Panc1 (cell line): ENCODE measurements at regions of chr7 and their contacts with region 1.

Region 1: DNA sequence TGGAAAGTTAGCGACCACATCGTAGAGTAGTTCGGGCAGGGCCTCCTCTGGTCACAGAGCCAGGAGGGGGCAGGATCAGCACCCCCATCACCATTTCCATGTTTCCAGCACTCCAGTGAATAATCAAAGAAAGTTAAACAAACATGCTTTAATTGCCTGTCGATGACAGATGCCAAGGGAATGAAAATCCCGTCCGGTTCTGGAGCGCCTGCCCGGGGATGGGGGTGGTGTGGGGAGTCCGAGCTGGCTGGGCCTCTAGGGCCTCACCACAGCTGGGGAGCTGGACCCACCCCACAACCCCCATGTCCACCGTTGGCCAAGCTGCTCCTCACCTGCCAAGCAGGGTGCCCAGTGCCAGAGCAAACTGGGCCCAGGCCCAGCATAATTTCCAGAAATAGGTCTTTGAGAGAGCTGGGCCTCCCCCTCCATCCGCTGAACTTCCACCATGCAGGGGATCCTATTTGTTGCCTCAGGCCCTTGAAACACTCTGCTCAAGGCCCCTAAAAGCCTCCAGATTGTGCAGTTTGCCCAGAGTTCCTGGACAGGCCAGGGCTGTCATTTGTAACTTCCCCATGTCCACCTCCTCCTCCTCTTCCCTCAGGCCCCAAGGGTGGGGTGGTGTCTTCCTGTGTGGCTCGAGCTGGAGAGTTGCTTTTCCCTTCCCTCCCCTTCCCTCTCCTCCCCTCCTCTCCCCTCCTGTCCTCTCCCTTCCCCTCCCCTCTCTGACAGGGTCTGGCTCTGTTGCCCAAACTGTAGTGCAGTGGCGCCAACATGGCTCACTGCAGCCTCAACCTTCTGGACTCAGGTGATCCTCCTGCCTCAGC is 101.0 kb downstream of the MYL10 start:
- DNase-seq: no peak
- ATAC-seq: peak; percentile 88
- H3K4me3 ChIP-seq: no peak overlapping the region
- H3K27ac ChIP-seq: peak overlapping the region; percentile 62
- H3K4me1 ChIP-seq: peaks cover 15% of the 10 kb centered on the region
- H3K27me3 ChIP-seq: no peaks in the 10 kb centered on the region
- CTCF ChIP-seq: no peak

Region 2: DNA sequence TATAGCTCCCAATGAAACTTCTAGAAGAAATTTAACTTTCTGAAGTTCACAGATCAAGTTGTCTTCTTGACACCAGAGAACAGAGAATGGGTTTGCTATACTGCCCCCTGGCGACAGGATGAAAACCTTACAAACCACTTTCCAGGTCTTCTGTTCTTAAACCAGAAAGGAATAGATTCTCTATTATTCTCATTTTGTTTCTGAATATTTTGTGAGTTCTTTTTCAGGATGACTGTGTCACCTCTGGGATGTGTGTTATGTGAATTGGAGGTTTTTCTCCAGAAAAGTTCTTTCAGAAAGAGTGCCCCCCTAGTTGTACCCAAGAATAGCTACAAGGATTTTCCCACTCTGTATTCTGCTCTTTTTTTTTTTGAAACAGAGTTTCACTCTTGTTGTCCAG is 212.7 kb before region 1 on chr7:
- CTCF ChIA-PET with region 1: no interaction called
- POLR2A ChIA-PET with region 1: no interaction called
- in situ Hi-C with region 1: no loop called
- intact Hi-C with region 1: no loop called
- DNase-seq: no peak
- ATAC-seq: peak; percentile 66; the same call in 1 of the 2 replicates
- H3K4me3 ChIP-seq: no peak overlapping the region
- H3K27ac ChIP-seq: no peak overlapping the region
- H3K4me1 ChIP-seq: no peaks in the 10 kb centered on the region
- H3K27me3 ChIP-seq: no peaks in the 10 kb centered on the region
- CTCF ChIP-seq: peak; percentile 85

Region 3: DNA sequence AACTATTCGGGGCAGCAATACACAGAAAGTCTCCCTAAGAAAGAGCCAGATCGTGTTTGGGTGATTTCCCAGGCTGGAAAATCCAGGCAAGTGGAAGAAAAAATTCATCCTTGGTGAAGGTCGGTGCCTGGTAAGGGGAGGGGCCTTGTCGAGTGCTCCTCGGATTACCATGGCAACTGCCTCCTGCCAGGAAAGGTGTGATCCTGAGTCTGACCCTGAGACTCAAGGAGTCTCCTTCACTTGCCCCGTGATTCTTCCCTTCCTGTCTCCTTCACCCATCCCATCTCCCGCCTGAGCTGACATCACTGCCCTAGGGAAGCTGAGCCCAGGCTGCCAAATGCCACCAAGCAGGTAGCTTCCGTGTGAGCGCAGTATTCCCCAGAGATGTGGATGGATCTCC is 11.2 kb before region 1 on chr7:
- CTCF ChIA-PET with region 1: no interaction called
- POLR2A ChIA-PET with region 1: no interaction called
- in situ Hi-C with region 1: no loop called
- intact Hi-C with region 1: no loop called
- DNase-seq: no peak
- ATAC-seq: no peak
- H3K4me3 ChIP-seq: no peak overlapping the region
- H3K27ac ChIP-seq: no peak overlapping the region
- H3K4me1 ChIP-seq: no peaks in the 10 kb centered on the region
- H3K27me3 ChIP-seq: no peaks in the 10 kb centered on the region
- CTCF ChIP-seq: no peak

Region 4: GRCh38 chr7:101575168-101575567 is 47.1 kb after region 1 on chr7:
- CTCF ChIA-PET with region 1: no interaction called
- POLR2A ChIA-PET with region 1: no interaction called
- in situ Hi-C with region 1: no loop called
- intact Hi-C with region 1: no loop called
- DNase-seq: no peak
- ATAC-seq: no peak
- H3K4me3 ChIP-seq: no peak overlapping the region
- H3K27ac ChIP-seq: no peak overlapping the region
- H3K4me1 ChIP-seq: no peaks in the 10 kb centered on the region
- H3K27me3 ChIP-seq: no peaks in the 10 kb centered on the region
- CTCF ChIP-seq: no peak

Region 5: DNA sequence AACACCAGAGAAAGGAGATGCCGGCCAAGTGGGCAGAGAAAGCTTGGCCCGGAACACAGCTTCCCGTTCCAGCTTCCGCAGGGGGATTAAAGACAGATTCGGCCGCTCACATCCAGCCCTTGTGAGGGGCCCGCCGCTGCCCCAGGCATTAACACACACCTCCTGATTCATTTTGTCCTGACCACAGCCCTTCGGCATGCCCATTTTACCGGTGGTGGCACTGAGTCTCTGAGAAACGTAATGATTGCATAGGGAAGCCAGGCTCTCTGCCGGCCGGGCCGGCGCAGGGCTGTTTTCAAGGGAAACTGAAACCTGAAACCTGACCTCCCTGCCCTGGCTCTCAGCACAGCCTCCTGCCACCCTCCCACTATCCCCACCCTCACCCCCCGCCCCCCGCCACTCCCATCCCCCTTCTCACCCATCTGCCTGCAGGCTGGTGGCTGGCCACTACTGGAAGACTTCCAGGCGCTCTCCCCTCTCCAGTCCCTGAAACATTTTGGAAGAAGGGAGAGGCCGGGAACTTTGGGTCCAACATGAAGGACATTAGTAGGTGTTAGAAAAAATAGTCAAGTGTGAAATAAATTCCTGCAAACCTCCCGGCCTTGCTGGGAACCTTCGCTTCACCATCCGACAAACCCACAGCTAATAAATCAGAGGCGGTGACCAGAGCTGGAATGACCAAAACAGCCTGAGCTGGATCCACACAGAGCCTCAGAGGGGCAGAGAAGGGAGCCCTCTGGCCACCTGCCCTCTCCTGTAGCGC is 205.8 kb after region 1 on chr7:
- CTCF ChIA-PET with region 1: no interaction called
- POLR2A ChIA-PET with region 1: no interaction called
- in situ Hi-C with region 1: no loop called
- intact Hi-C with region 1: no loop called
- DNase-seq: no peak
- ATAC-seq: no peak
- H3K4me3 ChIP-seq: no peak overlapping the region
- H3K27ac ChIP-seq: no peak overlapping the region
- H3K4me1 ChIP-seq: no peaks in the 10 kb centered on the region
- H3K27me3 ChIP-seq: no peaks in the 10 kb centered on the region
- CTCF ChIP-seq: no peak

Region 6: GRCh38 chr7:102125127-102125561 is 597.1 kb after region 1 on chr7:
- CTCF ChIA-PET with region 1: no interaction called
- POLR2A ChIA-PET with region 1: interaction called, 17 read pairs
- in situ Hi-C with region 1: no loop called
- intact Hi-C with region 1: no loop called
- DNase-seq: peak; percentile 45
- ATAC-seq: peak; percentile 94
- H3K4me3 ChIP-seq: no peak overlapping the region
- H3K27ac ChIP-seq: peak overlapping the region; percentile 32; the same call in 1 of the 2 replicates
- H3K4me1 ChIP-seq: peaks cover 12% of the 10 kb centered on the region; the same call in 1 of the 2 replicates
- H3K27me3 ChIP-seq: no peaks in the 10 kb centered on the region
- CTCF ChIP-seq: no peak